Activated naive CD8-positive, alpha-beta T cell treated with anti-CD3 and anti-CD28 coated beads, Interleukin-2, amount 10 ng/mL, durations not matched to agents 7 days and 5 days (primary cell): ENCODE measurements at regions of chr19 and their contacts with region 1.

Region 1: DNA sequence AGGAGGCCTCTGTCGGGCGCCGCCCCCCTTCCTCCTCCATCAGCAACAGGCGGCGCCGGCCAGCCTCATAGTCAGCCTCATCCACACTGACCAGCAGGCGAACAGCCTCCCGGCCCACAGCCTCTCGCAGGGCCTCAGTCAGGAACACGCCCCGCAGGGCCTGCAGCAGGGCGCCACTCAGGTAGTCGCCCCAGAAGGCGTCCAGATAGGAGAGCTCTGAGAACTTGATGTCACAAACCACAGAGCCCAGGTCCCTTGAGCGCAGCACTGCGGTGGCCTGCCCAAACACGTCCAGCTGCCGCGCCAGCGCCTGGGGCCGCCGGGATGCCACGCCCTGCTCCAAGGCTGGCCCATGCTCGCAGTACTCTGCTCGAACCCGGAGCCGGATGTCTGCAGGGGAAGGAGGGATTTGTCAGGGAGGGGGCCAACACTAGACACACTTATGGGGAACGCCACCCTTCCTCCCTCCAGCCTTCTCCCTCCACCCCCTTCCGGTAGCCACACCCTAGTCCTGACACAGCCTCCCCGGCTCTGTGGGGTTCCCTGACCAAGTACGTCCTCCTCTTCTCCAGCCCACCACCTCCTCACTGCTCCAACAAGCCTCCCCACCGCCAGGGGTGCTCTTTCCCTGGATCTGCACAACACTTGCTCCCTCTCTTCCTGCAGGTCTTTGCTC is 17.9 kb downstream of the DEDD2 start:
- DNase-seq: peak; percentile 86
- ATAC-seq: peak; percentile 68
- H3K4me3 Mint-ChIP-seq: peak overlapping the region; percentile 77
- H3K27ac Mint-ChIP-seq: peak overlapping the region; percentile 95
- H3K4me1 Mint-ChIP-seq: peaks cover 59% of the 10 kb centered on the region
- H3K27me3 Mint-ChIP-seq: no peaks in the 10 kb centered on the region

Region 2: DNA sequence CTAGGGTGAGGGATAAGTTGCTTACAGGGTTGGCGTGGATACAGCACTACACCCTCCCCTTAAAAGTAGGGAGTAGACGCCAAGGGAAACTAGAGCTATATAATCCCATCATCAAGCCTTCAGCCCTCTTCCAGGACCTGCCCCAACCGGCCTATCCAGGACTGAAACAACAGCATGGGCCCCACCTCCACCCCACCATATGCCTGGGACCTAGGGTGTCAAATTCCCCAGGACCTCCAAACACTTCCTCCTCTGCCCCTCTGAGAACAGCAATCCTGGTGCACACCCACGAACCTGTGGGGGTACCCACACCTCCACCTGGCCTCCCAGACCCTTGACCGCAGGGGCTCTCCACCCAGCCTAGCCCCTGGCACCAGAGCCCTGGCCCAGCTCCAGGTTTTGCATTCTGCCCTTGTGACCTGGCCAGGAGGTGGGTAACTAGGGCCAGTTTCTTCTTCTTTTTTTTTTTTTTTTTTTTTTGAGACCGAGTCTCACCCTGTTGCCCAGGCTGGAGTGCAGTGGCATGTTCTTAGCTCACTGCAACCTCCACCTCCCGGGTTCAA is 1086.8 kb before region 1 on chr19:
- POLR2A ChIA-PET with region 1: no interaction called
- DNase-seq: no peak
- ATAC-seq: no peak
- H3K4me3 Mint-ChIP-seq: no peak overlapping the region
- H3K27ac Mint-ChIP-seq: no peak overlapping the region
- H3K4me1 Mint-ChIP-seq: no peaks in the 10 kb centered on the region
- H3K27me3 Mint-ChIP-seq: peaks cover 8% of the 10 kb centered on the region

Region 3: GRCh38 chr19:42184401-42184861 is 15.1 kb before region 1 on chr19:
- POLR2A ChIA-PET with region 1: interaction called, 21 read pairs
- DNase-seq: peak; percentile 72
- ATAC-seq: peak; percentile 28
- H3K4me3 Mint-ChIP-seq: peak overlapping the region; percentile 49
- H3K27ac Mint-ChIP-seq: peak overlapping the region; percentile 81
- H3K4me1 Mint-ChIP-seq: peaks cover 26% of the 10 kb centered on the region
- H3K27me3 Mint-ChIP-seq: peaks cover 10% of the 10 kb centered on the region

Region 4: GRCh38 chr19:42219812-42220750 is 20.5 kb after region 1 on chr19 and contains the start of gene ZNF526:
- POLR2A ChIA-PET with region 1: interaction called, 18 read pairs
- DNase-seq: peak; percentile 97
- ATAC-seq: peak; percentile 82
- H3K4me3 Mint-ChIP-seq: peak within 1 kb of the TSS; percentile 97
- H3K27ac Mint-ChIP-seq: peak within 1 kb of the TSS; percentile 95
- H3K4me1 Mint-ChIP-seq: peaks cover 40% of the 10 kb centered on the region
- H3K27me3 Mint-ChIP-seq: no peaks in the 10 kb centered on the region
- total RNA-seq, gene ZNF526: 19.6 to 20.6 TPM